H1 (cell line): ENCODE measurements at regions of chr9 and their contacts with region 1.

Region 1: DNA sequence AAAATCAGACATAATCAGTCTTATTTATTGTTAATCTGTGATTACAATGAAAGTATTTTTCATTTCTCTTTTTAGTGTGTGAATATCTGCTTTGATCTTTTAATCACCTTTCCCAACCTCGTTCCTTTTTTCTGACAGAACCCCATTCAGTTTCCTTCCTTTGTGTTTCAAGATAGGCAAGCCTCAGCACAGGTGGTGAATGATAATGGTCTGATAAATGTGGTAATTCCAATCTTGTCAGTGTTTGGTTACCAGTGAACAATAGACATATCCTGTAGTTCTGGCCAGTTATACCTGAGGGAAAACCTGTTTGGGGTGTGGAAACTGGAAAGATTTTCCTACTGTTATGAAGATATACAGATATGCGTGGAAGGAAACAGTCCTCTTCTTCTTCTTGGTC is 13.5 kb downstream of the STX17 start:
- DNase-seq: no peak
- H3K4me3 ChIP-seq: no peak overlapping the region
- H3K27ac ChIP-seq: no peak overlapping the region
- H3K4me1 ChIP-seq: no peaks in the 10 kb centered on the region; a peak in 2 of 7 replicates
- H3K27me3 ChIP-seq: no peaks in the 10 kb centered on the region
- CTCF ChIP-seq: no peak
- EP300 ChIP-seq: no peak
- POLR2A ChIP-seq: no peak
- RAD21 ChIP-seq: no peak

Region 2: GRCh38 chr9:99906403-99907207 is 13.3 kb before region 1 on chr9 and contains the start of gene STX17:
- CTCF ChIA-PET with region 1: interaction called, 6 read pairs
- POLR2A ChIA-PET with region 1: interaction called, 16 read pairs
- DNase-seq: peak; percentile 25 to 96
- H3K4me3 ChIP-seq: peak within 1 kb of the TSS; percentile 73 to 85 (median 82)
- H3K27ac ChIP-seq: peak within 1 kb of the TSS; percentile 72; the same call in 1 of the 2 replicates
- H3K4me1 ChIP-seq: peaks cover 0 to 5% (median 3%) of the 10 kb centered on the region in 4 experiments; a peak in 3 of 7 replicates
- H3K27me3 ChIP-seq: no peaks in the 10 kb centered on the region; a peak in 1 of 7 replicates
- CTCF ChIP-seq: no peak
- EP300 ChIP-seq: no peak
- POLR2A ChIP-seq: peak; percentile 47 to 82; a peak in 2 of 3 replicates
- RAD21 ChIP-seq: no peak
- total RNA-seq, gene STX17: 16.3 TPM in 2 replicates